Cardiac septum (tissue), 1 donor: ENCODE measurements at regions of chr2 and their contacts with region 1.

Region 1: DNA sequence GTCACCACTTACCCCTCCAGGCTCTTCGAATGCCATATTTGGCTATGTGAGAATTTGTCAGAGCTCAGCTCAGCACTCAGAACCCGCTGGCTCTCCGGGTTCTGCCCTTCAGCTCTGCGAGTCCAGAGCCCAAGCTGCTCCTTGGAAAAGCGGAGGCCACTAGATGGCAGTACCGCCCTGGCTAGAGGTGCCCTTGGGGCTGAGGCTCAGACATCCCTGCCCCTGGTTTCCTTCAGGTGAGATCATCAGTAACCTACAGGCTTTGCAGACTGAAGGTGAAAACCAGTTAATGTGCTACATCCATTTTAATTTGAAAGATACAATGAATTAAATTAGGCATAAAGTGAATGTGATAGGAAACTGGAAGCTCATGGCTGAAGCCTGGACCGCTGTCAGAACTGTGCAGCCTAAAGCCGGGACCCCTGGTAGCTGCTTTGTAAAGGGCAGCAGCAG is 285.6 kb downstream of the AGAP1 start:
- DNase-seq: no peak

Region 2: DNA sequence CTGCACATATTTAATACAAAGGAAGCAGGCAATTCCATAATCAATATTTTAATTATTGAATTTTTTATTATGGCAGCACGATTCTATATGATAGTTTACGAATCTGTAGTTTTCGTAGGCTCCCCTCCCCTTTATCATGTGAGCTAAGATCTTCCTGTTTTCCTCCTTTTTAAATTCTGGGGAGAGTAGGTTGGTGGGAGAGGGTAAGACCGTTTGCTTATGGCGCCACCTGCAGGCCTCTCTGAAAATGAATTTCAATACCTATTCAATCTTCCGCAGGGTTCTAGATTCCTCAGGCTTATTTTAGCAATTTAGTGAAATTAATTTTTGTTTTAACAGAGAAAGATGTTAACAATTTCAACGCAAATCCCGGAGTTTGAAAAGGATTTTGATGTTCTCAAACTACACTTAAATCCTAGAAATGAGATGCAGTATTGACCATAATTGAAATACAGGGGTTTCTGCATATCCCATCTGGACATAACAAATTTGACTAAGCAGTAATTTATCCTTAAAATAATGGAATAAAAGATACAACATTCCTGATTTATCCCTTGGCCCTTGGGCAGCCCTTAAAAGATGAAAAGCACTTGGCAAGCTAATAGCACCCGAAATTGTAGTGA is 401.5 kb after region 1 on chr2:
- intact Hi-C with region 1: loop called (anchors 2 kb)
- DNase-seq: no peak